Dendritic cell treated with granulocyte-macrophage colony-stimulating factor and Interleukin-4, amounts not matched to agents 40 ng/mL and 50 ng/mL, for 4 days (primary cell): ENCODE measurements at regions of chrX and their contacts with region 1.

Region 1: DNA sequence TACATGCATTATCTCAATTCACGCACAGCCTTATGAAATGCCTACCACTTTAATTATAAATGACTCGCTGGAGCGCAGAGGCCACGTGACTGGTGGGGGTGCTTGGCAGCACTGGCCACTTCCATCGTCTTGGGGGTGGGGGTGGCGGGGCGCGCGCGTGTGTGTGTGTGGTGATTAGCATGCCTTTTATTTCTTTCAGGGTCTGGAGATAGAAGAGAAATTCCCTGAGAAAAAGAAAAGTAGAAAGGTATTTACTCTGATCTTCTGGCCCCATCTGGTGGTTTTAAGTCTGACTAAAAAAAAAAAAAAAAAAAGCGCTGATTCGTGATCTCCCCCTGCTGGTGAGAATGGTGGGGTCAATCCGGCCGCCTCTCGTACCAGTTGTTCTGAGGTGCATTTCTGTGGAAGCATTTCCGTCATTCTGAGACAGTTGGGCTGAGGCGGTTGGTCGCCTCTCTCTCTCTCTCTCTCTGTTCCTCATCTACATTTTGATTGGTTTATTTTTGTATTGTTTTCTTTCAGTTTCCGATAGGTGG is at the start of gene CCNB3:
- H3K4me3 Mint-ChIP-seq: peak within 1 kb of the TSS; percentile 76
- H3K27ac Mint-ChIP-seq: peak within 1 kb of the TSS; percentile 91
- H3K4me1 Mint-ChIP-seq: no peaks in the 10 kb centered on the region
- H3K27me3 Mint-ChIP-seq: no peaks in the 10 kb centered on the region

Region 2: GRCh38 chrX:49915361-49916222 is 288.8 kb before region 1 on chrX:
- intact Hi-C with region 1: loop called (anchors 5 kb)
- H3K4me3 Mint-ChIP-seq: no peak overlapping the region
- H3K27ac Mint-ChIP-seq: no peak overlapping the region
- H3K4me1 Mint-ChIP-seq: peaks cover 2% of the 10 kb centered on the region
- H3K27me3 Mint-ChIP-seq: no peaks in the 10 kb centered on the region